ENCODE measurements at regions of chr12 and their contacts with region 1.

Region 1: DNA sequence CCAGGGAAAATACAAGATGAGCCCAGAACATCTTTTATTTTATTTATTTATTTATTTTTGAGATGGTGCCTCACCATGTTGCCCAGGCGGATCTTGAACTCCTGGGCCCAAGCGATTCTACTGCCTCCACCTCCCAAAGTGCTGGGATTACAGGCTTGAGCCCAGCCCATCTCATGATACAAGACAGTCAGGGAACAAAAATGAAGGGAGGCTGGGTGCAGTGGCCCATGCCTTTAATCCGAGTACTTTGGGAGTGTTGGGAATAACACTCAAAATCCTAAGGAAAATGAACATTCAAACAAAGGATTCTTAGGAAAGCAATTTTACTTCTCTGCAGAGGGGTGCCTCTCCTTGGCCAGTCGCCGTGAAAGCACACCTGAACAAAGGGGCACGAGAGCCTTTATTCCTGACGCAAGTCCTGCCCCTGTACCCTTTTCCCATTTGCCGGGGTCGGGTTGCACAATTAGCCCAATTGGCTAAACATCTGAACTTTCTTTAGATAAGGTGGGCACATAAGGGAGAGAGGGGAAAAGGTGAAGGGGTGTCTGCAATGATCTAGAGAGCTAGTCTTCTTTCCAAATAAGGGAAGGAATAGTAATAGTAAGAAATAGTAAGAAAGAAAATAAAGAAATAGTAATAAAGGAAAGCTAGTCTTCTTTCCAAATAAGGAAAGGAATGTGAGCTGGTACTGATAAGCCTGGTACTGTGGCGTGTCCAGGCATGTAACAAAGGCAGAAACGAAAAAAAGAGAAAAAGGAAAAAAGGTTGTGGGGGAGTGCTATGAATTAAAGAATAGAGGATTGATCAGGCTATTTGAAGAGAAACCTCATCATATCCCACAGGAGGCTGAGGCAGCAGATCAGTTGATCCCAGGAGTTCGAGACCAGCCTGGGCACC is 13.4 kb downstream of the NCAPD2 start:
- DNase-seq: peak; percentile 42
- ATAC-seq: peak; percentile 86
- H3K4me3 ChIP-seq: no peak overlapping the region
- H3K27ac ChIP-seq: peak overlapping the region; percentile 93
- H3K4me1 ChIP-seq: peaks cover 10% of the 10 kb centered on the region
- H3K27me3 ChIP-seq: no peaks in the 10 kb centered on the region
- CTCF ChIP-seq: no peak
- POLR2A ChIP-seq: no peak
- RAD21 ChIP-seq: no peak

Region 2: DNA sequence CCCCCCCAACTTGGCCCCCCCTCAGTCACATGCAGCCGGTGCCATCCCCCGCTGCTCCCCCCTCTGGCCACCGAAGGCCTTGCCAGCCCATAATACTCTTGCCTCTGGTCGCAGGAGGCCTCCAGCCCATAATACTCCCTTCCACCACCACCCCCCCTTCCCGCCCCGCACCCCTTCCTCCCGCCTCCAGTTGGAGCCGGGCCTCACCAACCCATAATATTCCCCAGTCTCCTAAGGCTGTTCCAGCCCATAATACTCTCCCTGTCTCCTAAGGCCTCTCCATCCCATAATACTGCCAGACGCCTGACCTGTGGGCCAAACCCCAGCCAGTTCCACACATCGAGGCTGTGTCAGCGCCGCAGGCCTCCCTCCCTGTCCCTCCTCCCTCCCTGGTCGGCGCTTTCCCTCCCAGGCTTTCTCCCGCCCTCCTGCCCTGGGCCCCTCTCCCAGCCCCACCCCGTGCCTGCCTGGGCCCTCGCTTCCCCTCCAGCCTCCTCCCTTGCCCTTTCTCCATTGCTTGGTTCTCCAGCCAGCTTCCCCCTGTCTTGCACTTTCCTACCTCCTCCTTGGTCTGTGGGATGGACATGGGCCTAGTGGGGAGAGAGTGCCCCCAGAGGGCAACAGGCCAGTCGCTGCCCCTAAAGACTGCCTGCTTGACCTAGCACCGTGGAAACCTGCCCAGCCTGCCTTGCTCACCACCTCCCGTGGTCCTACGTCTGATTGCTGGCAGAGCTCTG is 106.6 kb after region 1 on chr12:
- CTCF ChIA-PET with region 1: no interaction called
- POLR2A ChIA-PET with region 1: no interaction called
- dilution Hi-C with region 1: no loop called
- in situ Hi-C with region 1: no loop called
- intact Hi-C with region 1: no loop called
- DNase-seq: peak; percentile 99
- ATAC-seq: peak; percentile 83
- H3K4me3 ChIP-seq: no peak overlapping the region
- H3K27ac ChIP-seq: peak overlapping the region; percentile 88
- H3K4me1 ChIP-seq: peaks cover 23% of the 10 kb centered on the region
- H3K27me3 ChIP-seq: no peaks in the 10 kb centered on the region
- CTCF ChIP-seq: 0 out of 2 replicates have a peak, but pooled peaks have one; percentile 8
- POLR2A ChIP-seq: no peak
- RAD21 ChIP-seq: no peak

Region 3: DNA sequence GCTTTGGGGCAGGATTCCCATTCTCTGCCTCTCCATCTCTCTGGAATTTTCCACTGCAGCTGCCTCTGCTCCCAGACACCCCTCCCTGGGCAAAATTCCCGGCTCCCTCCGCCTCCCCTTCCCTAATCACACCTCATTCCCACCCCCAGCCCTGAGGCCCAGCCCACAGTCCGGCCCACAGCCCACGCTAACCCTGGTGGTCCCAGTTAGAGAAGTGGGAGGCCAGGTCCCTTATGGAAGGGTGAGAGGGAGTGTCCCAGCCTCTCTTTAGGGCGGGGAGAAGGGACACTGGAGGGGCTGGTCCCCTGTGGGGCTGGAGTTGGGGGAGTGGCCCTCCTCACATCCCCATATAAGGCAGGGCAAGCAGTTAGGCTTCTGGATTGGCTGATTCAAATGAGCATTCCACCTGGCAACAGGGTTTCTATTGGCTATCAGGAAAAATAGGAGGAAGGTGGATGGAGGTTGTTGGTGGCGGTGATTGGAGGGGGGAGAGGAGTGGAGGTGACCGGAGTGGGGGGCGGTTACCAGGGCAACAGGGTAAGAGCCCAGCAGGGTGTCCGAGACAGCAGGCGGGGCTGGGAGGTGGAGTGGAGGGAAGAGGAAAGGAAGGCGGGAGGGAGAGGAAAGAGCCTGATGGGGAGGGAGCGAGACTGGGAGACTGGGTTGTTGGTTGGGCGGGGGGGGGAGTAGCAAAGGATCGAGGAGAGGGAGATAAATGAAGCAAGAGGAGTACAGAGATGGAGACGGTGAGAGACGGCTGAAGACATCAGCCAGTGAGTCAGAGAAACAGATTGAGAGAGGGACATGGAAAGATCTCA is 256.9 kb after region 1 on chr12:
- CTCF ChIA-PET with region 1: no interaction called
- POLR2A ChIA-PET with region 1: interaction called, 11 read pairs
- dilution Hi-C with region 1: no loop called
- in situ Hi-C with region 1: no loop called
- intact Hi-C with region 1: no loop called
- DNase-seq: peak; percentile 99
- ATAC-seq: peak; percentile 82
- H3K4me3 ChIP-seq: peak overlapping the region; percentile 12; the same call in 1 of the 2 replicates
- H3K27ac ChIP-seq: peak overlapping the region; percentile 90
- H3K4me1 ChIP-seq: peaks cover 21% of the 10 kb centered on the region
- H3K27me3 ChIP-seq: no peaks in the 10 kb centered on the region
- CTCF ChIP-seq: no peak
- POLR2A ChIP-seq: no peak
- RAD21 ChIP-seq: no peak